SK-N-SH (cell line): ENCODE measurements at regions of chr17 and their contacts with region 1.

Region 1: DNA sequence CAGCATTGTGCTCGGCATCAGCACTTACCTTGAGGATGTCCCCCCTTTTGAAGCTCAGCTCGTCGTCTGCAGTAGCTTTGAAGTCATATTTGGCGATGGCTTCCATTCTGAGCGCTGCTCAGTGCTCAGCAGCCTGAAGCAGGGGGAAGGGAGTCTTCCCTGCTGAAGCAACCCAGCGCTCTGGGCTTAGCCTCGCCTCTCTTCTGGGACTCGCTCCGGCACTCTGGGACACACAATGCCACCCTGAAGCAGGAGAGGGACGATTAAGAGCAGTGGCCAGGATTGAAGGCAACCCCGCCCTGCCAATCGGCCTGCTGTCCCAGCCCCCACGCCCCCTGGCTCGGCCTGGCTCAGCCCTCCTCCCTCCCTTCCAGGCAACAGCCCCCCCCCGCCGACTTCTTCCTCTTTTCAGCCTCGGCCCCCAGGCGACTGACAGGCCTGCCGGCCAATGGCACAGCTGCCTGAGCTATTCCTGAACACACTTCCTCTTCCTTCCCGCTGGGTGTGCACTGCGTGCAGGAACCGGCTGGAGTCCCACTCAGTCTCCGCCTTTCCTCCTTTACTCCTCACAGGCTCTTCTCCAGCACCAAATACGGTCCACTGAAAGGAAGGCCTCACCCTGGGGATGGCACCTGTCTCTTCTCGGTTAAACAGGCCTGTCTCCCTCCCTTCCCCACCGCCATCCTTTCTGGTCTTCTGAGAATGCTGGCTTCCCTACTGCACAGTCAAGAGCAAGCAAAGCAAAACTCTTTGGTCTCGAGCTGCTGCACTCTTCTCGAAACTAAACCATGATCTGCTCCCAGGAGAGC is 11.8 kb downstream of the GRB2 start:
- DNase-seq: peak; percentile 98
- H3K4me3 ChIP-seq: peak overlapping the region; percentile 80 to 99
- H3K27ac ChIP-seq: peak overlapping the region; percentile 71 to 95
- H3K4me1 ChIP-seq: peaks cover 12 to 21% of the 10 kb centered on the region in 2 experiments
- H3K27me3 ChIP-seq: no peaks in the 10 kb centered on the region
- CTCF ChIP-seq: peak; percentile 15; the same call in 1 of the 2 replicates
- EP300 ChIP-seq: peak in 1 of 2 experiments; percentile 45; a peak in 1 of 4 replicates
- RAD21 ChIP-seq: peak; percentile 11; the same call in 1 of the 2 replicates

Region 2: DNA sequence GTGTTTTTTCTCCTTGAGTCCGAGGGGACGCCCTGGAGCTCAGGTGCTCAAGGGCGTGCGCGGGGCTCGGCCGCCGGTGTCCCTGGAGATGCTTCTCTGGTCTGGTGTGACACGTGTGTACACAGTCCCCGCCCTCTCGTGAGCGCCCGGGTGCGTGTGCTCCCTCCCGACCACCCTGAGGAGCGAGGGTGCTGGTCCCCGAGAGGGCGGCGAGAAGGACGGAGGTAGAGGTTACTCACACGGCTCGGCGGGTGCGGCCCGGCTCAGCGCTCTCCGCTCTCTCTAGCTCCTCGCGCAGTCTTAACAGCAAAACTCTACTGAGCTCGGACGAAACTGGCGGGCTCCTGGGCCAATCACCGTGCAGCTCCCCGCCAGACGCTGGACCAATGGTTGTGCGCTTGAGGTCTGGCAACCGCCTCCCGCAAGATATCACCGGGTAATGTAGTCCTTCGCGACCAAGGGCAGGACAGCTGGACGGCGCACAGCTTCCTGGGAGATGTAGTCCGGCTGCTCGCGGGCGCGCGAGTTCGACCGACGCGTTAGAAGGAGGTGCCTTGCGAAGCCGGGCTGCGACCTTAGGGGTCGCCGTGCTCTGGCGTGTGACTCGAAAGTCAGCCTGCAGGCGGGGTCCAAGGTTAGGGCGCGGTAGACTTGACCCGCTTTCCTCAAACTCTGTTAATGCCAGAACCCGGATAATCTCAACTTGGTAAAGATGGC is 104.5 kb before region 1 on chr17 and contains the start of gene SLC25A19:
- CTCF ChIA-PET with region 1: interaction called, 6 read pairs
- POLR2A ChIA-PET with region 1: interaction called, 15 read pairs
- DNase-seq: peak; percentile 99
- H3K4me3 ChIP-seq: peak within 1 kb of the TSS; percentile 68 to 80
- H3K27ac ChIP-seq: peak within 1 kb of the TSS; percentile 73 to 80
- H3K4me1 ChIP-seq: peaks cover 4 to 5% of the 10 kb centered on the region in 2 experiments; a peak in 2 of 4 replicates
- H3K27me3 ChIP-seq: no peaks in the 10 kb centered on the region
- CTCF ChIP-seq: peak; percentile 26; the same call in 1 of the 2 replicates
- EP300 ChIP-seq: no peak
- RAD21 ChIP-seq: 0 out of 2 replicates have a peak, but pooled peaks have one; percentile 34
- polyA plus RNA-seq, gene SLC25A19: 11.7 and 13.2 TPM in 2 replicates

Region 3: GRCh38 chr17:75325827-75326225 is 67.9 kb before region 1 on chr17:
- CTCF ChIA-PET with region 1: interaction called, 54 read pairs
- POLR2A ChIA-PET with region 1: interaction called, 7 read pairs
- DNase-seq: no peak
- H3K4me3 ChIP-seq: no peak overlapping the region
- H3K27ac ChIP-seq: peak overlapping the region in 1 of 2 experiments; percentile 62; a peak in 2 of 4 replicates
- H3K4me1 ChIP-seq: peaks cover 3 to 16% of the 10 kb centered on the region in 2 experiments; a peak in 3 of 4 replicates
- H3K27me3 ChIP-seq: no peaks in the 10 kb centered on the region
- CTCF ChIP-seq: no peak
- EP300 ChIP-seq: no peak
- RAD21 ChIP-seq: no peak